CD14-positive monocyte (primary cell): ENCODE measurements at regions of chr15 and their contacts with region 1.

Region 1: DNA sequence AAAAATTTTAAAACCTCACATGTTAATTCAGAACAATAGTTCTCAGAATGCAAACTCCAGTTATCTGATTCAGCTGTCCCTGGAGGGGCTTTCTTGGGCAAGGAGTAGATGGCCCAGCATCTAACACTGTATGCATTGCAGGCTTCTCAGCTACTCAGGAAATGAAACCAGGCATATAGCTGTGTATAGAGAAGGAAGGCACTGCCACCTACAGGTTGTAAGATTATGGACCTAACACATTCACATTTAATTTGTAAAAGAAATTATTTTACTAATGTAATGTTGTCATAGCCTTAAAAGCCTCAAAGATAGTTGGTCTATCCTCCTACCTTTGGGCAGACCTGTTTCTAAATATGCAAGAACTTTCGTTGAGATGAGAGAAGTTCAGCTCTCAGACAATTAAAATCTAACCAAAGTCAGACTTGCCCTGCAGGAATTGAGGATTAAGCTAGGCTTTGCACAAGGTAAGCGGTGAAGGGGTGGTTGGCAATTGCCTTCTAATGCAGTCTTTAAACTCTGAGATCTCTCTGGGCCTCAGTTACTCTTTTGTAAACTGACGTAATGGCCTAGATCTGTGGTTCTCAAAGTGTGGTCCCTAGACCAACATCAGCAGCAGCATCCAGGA is 132.8 kb upstream of the SLC24A5 start:
- DNase-seq: peak; percentile 32 to 58 (median 57)
- H3K4me3 ChIP-seq: no peak overlapping the region
- H3K4me3 Mint-ChIP-seq: no peak overlapping the region
- H3K27ac ChIP-seq: no peak overlapping the region
- H3K27ac Mint-ChIP-seq: no peak overlapping the region
- H3K4me1 ChIP-seq: peaks cover 0 to 7% of the 10 kb centered on the region in 2 donors
- H3K4me1 Mint-ChIP-seq: peaks cover 8% of the 10 kb centered on the region
- H3K27me3 ChIP-seq: peaks cover 0 to 2% of the 10 kb centered on the region in 2 donors
- H3K27me3 Mint-ChIP-seq: peaks cover 0 to 2% (median 0%) of the 10 kb centered on the region in 3 donors
- CTCF ChIP-seq: peak; percentile 80

Region 2: GRCh38 chr15:46312133-46312740 is 1675.8 kb before region 1 on chr15:
- intact Hi-C with region 1: loop called (anchors 5 kb)
- DNase-seq: peak; percentile 9 to 30 (median 26)
- H3K4me3 ChIP-seq: no peak overlapping the region
- H3K4me3 Mint-ChIP-seq: no peak overlapping the region
- H3K27ac ChIP-seq: no peak overlapping the region
- H3K27ac Mint-ChIP-seq: no peak overlapping the region
- H3K4me1 ChIP-seq: no peaks in the 10 kb centered on the region
- H3K4me1 Mint-ChIP-seq: no peaks in the 10 kb centered on the region
- H3K27me3 ChIP-seq: no peaks in the 10 kb centered on the region
- H3K27me3 Mint-ChIP-seq: peaks cover 0 to 4% (median 2%) of the 10 kb centered on the region in 3 donors
- CTCF ChIP-seq: peak; percentile 82

Region 3: DNA sequence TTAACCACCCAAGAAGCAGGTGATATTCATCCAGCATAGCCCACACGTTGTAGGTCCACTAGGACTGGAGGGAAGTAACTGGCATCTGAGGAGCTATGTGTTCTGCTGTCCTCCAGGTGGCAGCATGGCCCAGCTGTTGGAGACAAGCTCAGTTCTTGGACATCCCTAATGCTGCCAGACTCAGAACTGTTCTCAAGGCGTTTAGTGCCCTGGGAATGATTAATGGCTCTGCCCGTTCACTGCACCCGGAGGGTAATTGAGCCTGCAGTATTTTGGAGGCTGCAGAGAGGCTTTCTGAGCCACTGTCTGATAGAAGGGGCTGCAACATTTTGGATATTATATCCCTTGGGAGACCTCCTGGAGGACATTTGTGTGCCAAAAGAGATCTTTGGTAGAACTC is 792.0 kb before region 1 on chr15:
- intact Hi-C with region 1: loop called in 1 of 2 experiments (anchors 5 kb)
- DNase-seq: peak; percentile 15 to 43 (median 19)
- H3K4me3 ChIP-seq: no peak overlapping the region
- H3K4me3 Mint-ChIP-seq: no peak overlapping the region
- H3K27ac ChIP-seq: no peak overlapping the region
- H3K27ac Mint-ChIP-seq: no peak overlapping the region
- H3K4me1 ChIP-seq: no peaks in the 10 kb centered on the region
- H3K4me1 Mint-ChIP-seq: no peaks in the 10 kb centered on the region
- H3K27me3 ChIP-seq: no peaks in the 10 kb centered on the region
- H3K27me3 Mint-ChIP-seq: peaks cover 5 to 14% (median 7%) of the 10 kb centered on the region in 3 donors
- CTCF ChIP-seq: peak; percentile 64

Region 4: DNA sequence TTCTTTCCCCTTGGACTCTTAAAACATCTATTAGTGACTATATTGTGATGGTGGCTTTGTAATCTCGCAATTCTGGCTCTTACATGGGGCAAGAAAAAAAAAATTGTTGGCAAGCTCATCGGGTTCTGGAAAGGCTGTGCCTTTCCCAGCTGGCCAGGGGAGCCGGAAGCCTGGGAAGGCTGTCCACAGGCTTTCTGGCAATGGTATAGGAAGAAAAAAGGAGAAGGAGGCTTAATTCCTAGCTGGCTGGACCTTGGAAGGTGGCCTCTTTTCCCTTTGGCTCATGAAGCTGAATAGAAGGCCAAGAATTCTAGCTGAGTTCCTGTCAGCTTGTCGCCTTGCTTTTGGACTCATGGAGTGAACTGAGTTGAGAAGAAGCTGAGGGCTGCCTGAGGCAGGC is 514.2 kb before region 1 on chr15:
- intact Hi-C with region 1: loop called (anchors 5 to 10 kb)
- DNase-seq: no peak
- H3K4me3 ChIP-seq: no peak overlapping the region
- H3K4me3 Mint-ChIP-seq: no peak overlapping the region
- H3K27ac ChIP-seq: no peak overlapping the region
- H3K27ac Mint-ChIP-seq: no peak overlapping the region
- H3K4me1 ChIP-seq: no peaks in the 10 kb centered on the region
- H3K4me1 Mint-ChIP-seq: no peaks in the 10 kb centered on the region
- H3K27me3 ChIP-seq: no peaks in the 10 kb centered on the region
- H3K27me3 Mint-ChIP-seq: peaks cover 0 to 9% (median 3%) of the 10 kb centered on the region in 3 donors
- CTCF ChIP-seq: no peak

Region 5: DNA sequence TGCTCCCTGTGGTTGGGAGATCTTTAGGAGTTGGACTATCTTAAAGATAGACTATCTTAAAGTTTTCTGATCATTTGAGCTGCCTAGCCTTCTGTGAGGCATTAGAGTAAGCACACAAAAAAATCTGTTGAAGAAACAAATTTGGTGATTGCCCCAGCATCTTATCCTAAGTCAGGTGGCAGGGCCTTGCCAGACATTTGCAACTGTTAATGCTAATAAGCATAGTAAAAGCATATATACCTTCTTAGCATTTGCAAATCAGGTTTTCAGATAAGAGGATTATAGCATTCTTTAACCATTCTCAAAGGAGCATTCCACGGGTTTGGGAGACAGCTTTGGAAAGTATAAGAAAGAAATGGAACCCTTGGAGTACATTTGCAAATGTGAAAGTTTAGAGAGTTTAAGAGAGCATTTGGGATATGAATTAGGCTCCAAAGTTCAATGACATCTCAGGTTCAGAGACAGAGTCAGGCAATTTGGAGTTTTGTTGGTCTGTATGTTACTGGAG is 209.7 kb before region 1 on chr15:
- intact Hi-C with region 1: no loop called
- DNase-seq: no peak
- H3K4me3 ChIP-seq: no peak overlapping the region
- H3K4me3 Mint-ChIP-seq: no peak overlapping the region
- H3K27ac ChIP-seq: no peak overlapping the region
- H3K27ac Mint-ChIP-seq: no peak overlapping the region
- H3K4me1 ChIP-seq: no peaks in the 10 kb centered on the region
- H3K4me1 Mint-ChIP-seq: no peaks in the 10 kb centered on the region
- H3K27me3 ChIP-seq: no peaks in the 10 kb centered on the region
- H3K27me3 Mint-ChIP-seq: peaks cover 0 to 5% (median 2%) of the 10 kb centered on the region in 3 donors
- CTCF ChIP-seq: no peak

Region 6: GRCh38 chr15:48266024-48266689 is 278.1 kb after region 1 on chr15:
- intact Hi-C with region 1: no loop called
- DNase-seq: no peak
- H3K4me3 ChIP-seq: no peak overlapping the region
- H3K4me3 Mint-ChIP-seq: no peak overlapping the region
- H3K27ac ChIP-seq: no peak overlapping the region
- H3K27ac Mint-ChIP-seq: no peak overlapping the region
- H3K4me1 ChIP-seq: no peaks in the 10 kb centered on the region
- H3K4me1 Mint-ChIP-seq: no peaks in the 10 kb centered on the region
- H3K27me3 ChIP-seq: peaks cover 0 to 9% of the 10 kb centered on the region in 2 donors
- H3K27me3 Mint-ChIP-seq: peaks cover 2 to 10% (median 6%) of the 10 kb centered on the region in 3 donors
- CTCF ChIP-seq: no peak

Region 7: DNA sequence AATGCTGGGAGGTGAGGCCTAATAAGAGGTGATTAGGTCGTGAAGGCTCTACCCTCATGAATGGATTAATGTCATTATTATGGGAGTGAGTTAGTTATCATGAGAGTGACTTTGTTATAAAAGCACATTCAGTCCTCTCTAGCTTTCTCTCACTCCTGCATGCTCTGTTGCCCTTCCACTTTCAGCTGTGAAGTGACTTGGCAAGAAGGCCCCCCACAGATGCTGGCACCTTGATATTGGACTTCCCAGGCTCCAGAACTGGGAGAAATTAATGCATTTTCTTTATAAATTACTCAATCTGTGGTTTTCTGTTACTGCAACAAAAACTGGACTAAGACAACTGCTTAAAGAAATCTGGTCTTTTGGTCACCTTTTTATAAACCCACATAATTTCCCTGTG is 513.2 kb after region 1 on chr15:
- intact Hi-C with region 1: no loop called
- DNase-seq: no peak
- H3K4me3 ChIP-seq: no peak overlapping the region
- H3K4me3 Mint-ChIP-seq: no peak overlapping the region
- H3K27ac ChIP-seq: no peak overlapping the region
- H3K27ac Mint-ChIP-seq: no peak overlapping the region
- H3K4me1 ChIP-seq: no peaks in the 10 kb centered on the region
- H3K4me1 Mint-ChIP-seq: no peaks in the 10 kb centered on the region
- H3K27me3 ChIP-seq: no peaks in the 10 kb centered on the region
- H3K27me3 Mint-ChIP-seq: no peaks in the 10 kb centered on the region
- CTCF ChIP-seq: no peak